Panc1 (cell line): ENCODE measurements at regions of chr1 and their contacts with region 1.

Region 1: GRCh38 chr1:79128722-79129121 is 122.2 kb upstream of the ADGRL4 start:
- DNase-seq: peak; percentile 46
- ATAC-seq: peak; percentile 90
- H3K4me3 ChIP-seq: no peak overlapping the region
- H3K27ac ChIP-seq: no peak overlapping the region
- H3K4me1 ChIP-seq: no peaks in the 10 kb centered on the region
- H3K27me3 ChIP-seq: no peaks in the 10 kb centered on the region
- CTCF ChIP-seq: no peak

Region 2: DNA sequence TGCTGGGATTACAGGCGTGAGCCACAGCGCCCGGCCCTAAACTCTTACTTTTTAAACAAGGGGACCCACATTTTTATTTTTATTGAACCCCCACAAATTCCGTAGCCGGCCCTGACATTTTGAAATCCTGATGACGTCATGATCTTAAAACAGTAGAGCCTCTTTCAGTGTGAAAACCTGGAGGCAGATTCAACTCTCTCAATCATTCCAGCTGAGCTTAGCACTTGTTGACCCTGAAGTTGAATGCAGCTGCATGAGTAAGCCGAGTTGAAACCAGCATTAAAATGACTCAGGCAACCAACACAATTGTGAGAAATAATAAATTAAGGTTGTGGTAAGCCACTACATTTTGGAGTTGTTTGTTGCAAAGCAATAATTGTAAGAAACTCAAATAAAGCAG is 28.3 kb before region 1 on chr1:
- CTCF ChIA-PET with region 1: no interaction called
- POLR2A ChIA-PET with region 1: interaction called, 13 read pairs
- in situ Hi-C with region 1: no loop called
- intact Hi-C with region 1: no loop called
- DNase-seq: no peak
- ATAC-seq: no peak
- H3K4me3 ChIP-seq: no peak overlapping the region
- H3K27ac ChIP-seq: no peak overlapping the region
- H3K4me1 ChIP-seq: no peaks in the 10 kb centered on the region
- H3K27me3 ChIP-seq: no peaks in the 10 kb centered on the region
- CTCF ChIP-seq: no peak